Activated naive CD4-positive, alpha-beta T cell treated with anti-CD3 and anti-CD28 coated beads, Interleukin-2, amount 10 ng/mL, durations not matched to agents 7 days and 5 days (primary cell): ENCODE measurements at regions of chr4 and their contacts with region 1.

Region 1: GRCh38 chr4:74675673-74676279 is 118.5 kb downstream of the BTC start:
- DNase-seq: no peak
- H3K4me3 Mint-ChIP-seq: no peak overlapping the region
- H3K27ac Mint-ChIP-seq: no peak overlapping the region
- H3K4me1 Mint-ChIP-seq: no peaks in the 10 kb centered on the region
- H3K27me3 Mint-ChIP-seq: peaks cover 18% of the 10 kb centered on the region

Region 2: DNA sequence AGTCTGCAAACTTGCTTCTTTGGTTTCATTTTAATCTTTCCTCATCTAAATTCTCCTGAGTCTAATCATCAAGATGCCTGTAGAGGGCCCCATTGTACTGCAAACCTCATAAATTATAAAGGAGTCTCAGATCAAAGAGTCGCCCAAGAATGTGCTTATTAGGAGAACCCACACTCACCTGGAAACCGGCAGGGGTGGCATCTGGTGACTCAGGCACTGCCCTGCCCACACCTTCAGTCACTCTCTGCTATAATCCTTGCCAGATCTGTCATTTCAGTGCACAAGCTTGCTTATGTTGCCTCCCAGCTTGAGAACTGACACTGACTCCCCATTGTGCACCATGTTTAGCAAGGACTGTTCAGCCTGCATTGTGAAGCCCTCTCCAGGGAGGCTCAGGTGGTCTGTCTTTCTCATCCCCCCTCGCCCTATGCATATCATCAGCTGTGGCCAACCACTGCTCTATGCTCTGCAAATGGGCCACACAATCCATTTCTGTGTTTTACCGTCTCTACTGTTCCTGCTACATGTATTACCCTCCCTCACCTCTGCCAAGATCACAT is 355.1 kb before region 1 on chr4:
- CTCF ChIA-PET with region 1: interaction called, 47 read pairs
- DNase-seq: peak; percentile 38
- H3K4me3 Mint-ChIP-seq: no peak overlapping the region
- H3K27ac Mint-ChIP-seq: no peak overlapping the region
- H3K4me1 Mint-ChIP-seq: no peaks in the 10 kb centered on the region
- H3K27me3 Mint-ChIP-seq: peaks cover 14% of the 10 kb centered on the region

Region 3: GRCh38 chr4:74370912-74371311 is 304.9 kb before region 1 on chr4:
- CTCF ChIA-PET with region 1: interaction called, 19 read pairs
- DNase-seq: peak; percentile 30
- H3K4me3 Mint-ChIP-seq: no peak overlapping the region
- H3K27ac Mint-ChIP-seq: no peak overlapping the region
- H3K4me1 Mint-ChIP-seq: no peaks in the 10 kb centered on the region
- H3K27me3 Mint-ChIP-seq: peaks cover 5% of the 10 kb centered on the region

Region 4: DNA sequence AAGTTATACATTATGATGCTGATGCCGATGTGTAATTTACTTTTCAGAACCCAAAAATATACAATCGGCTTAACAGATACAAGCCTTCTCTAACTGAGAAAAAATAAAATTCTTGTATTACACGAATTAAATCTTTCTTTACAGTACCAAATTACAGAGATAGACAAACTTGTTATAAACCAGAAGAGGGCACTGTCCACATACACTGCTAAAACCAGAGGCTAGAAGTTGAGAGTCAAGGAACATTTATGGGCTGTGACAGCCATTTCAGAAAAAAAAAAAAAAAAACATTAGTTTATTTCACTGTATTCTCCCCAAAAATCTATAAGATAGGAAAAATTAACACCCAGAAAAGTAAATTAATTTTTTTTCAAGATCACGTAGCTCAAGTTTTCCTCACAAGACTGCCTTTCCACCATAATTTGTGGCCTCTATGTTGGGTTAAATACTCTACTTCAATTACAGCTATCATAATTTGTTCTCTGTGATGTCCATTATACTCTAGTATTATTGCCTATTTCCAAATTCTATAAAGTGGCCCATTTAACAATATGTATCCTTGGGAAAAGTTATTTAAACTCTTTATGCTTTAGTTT is 298.8 kb before region 1 on chr4:
- CTCF ChIA-PET with region 1: interaction called, 19 read pairs
- DNase-seq: no peak
- H3K4me3 Mint-ChIP-seq: no peak overlapping the region
- H3K27ac Mint-ChIP-seq: no peak overlapping the region
- H3K4me1 Mint-ChIP-seq: no peaks in the 10 kb centered on the region
- H3K27me3 Mint-ChIP-seq: no peaks in the 10 kb centered on the region